ENCODE measurements at regions of chr2 and their contacts with region 1.

Region 1: GRCh38 chr2:237572021-237572741 is 5.8 kb downstream of the PRLH start:
- DNase-seq: peak; percentile 92 to 95
- ATAC-seq: peak; percentile 89 to 99
- H3K4me3 ChIP-seq: no peak overlapping the region
- H3K27ac ChIP-seq: peak overlapping the region; percentile 55 to 71; a peak in 5 of 6 replicates
- H3K4me1 ChIP-seq: peaks cover 10% of the 10 kb centered on the region; the same call in 2 of the 3 replicates
- CTCF ChIP-seq: peak; percentile 98
- EP300 ChIP-seq: no peak
- POLR2A ChIP-seq: no peak
- RAD21 ChIP-seq: peak; percentile 99 to 100

Region 2: GRCh38 chr2:237122214-237122666 is 449.9 kb before region 1 on chr2:
- CTCF ChIA-PET with region 1: interaction called, 49 read pairs
- POLR2A ChIA-PET with region 1: no interaction called
- DNase-seq: peak; percentile 35 to 80
- ATAC-seq: peak; percentile 92 to 97
- H3K4me3 ChIP-seq: no peak overlapping the region
- H3K27ac ChIP-seq: peak overlapping the region; percentile 44 to 73; a peak in 4 of 6 replicates
- H3K4me1 ChIP-seq: peaks cover 6% of the 10 kb centered on the region
- CTCF ChIP-seq: peak; percentile 86
- EP300 ChIP-seq: no peak
- POLR2A ChIP-seq: no peak
- RAD21 ChIP-seq: peak; percentile 91 to 92

Region 3: DNA sequence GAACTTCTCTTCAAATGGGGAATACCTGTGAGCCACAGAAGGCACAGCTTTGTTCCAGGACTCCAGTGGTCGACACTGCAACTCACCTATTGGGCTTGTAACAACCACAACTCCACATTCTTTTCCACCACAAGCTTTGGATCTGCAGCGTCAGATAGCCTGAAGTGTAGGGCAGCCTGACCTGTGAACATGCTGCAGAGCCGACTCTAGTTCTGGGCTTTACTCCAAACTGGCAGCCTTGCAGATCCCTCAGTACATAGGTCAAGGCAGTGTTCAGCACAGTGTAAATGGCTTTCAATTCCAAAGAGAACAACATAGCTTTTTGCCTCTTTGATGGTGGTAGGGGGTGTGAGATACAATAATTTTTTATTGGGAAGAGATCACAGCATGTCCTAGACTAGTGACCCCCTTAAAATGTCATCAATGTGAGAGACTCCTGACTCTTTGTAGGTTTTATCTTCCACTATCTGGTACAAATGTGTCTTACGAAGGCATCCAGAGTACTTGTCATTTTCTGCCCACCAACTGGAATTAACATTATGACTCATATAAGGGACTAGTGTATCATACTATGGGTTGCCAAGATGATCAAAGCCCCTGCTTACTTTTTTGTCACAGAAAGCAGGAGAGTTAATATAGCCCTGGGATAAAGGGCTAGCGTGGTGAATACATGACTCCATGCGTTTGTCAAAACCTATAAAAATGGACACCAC is 336.6 kb before region 1 on chr2:
- CTCF ChIA-PET with region 1: no interaction called
- POLR2A ChIA-PET with region 1: no interaction called
- DNase-seq: no peak
- ATAC-seq: peak; percentile 43 to 77; a peak in 4 of 6 replicates
- H3K4me3 ChIP-seq: no peak overlapping the region
- H3K27ac ChIP-seq: peak overlapping the region; percentile 21 to 55; a peak in 4 of 6 replicates
- H3K4me1 ChIP-seq: peaks cover 16% of the 10 kb centered on the region; the same call in 2 of the 3 replicates
- CTCF ChIP-seq: no peak
- EP300 ChIP-seq: no peak
- POLR2A ChIP-seq: no peak
- RAD21 ChIP-seq: no peak

Region 4: DNA sequence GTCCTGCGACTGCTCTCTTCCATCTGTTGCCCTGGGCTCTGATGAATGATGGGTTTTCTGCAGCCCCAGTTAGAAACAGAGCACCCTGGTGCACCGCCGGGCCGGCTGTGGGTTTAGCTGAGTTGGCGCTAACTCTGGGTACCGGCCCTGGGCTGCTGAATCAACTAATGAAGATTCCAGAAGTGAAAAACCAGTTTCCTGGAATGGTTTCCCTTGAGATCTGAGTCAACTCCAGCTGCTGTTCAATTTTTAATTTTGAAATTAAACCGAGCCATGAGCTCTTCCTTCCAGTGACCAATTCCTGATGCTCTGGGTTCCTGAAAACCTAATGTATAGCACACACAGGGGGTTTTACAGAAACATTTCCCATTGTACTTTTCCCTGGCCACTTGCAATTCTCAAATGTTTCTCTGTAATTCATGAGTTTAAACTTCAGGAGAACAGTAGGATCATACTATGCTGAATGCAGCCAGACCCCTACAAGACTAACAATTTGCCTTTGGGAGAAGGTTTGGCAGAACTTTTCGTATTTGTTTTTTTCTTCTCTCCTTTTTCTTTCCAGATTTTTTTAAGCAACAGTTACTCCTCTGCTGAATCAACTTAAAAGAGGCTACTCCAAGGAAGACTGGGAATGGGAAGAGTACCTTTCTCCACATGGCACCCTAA is 163.7 kb before region 1 on chr2:
- CTCF ChIA-PET with region 1: interaction called, 12 read pairs
- POLR2A ChIA-PET with region 1: interaction called, 9 read pairs
- DNase-seq: no peak
- ATAC-seq: no peak
- H3K4me3 ChIP-seq: no peak overlapping the region
- H3K27ac ChIP-seq: no peak overlapping the region
- H3K4me1 ChIP-seq: 0 out of 3 replicates have a peak, but pooled peaks cover 5% of the 10 kb centered on the region
- CTCF ChIP-seq: no peak
- EP300 ChIP-seq: no peak
- POLR2A ChIP-seq: no peak
- RAD21 ChIP-seq: no peak

Region 5: DNA sequence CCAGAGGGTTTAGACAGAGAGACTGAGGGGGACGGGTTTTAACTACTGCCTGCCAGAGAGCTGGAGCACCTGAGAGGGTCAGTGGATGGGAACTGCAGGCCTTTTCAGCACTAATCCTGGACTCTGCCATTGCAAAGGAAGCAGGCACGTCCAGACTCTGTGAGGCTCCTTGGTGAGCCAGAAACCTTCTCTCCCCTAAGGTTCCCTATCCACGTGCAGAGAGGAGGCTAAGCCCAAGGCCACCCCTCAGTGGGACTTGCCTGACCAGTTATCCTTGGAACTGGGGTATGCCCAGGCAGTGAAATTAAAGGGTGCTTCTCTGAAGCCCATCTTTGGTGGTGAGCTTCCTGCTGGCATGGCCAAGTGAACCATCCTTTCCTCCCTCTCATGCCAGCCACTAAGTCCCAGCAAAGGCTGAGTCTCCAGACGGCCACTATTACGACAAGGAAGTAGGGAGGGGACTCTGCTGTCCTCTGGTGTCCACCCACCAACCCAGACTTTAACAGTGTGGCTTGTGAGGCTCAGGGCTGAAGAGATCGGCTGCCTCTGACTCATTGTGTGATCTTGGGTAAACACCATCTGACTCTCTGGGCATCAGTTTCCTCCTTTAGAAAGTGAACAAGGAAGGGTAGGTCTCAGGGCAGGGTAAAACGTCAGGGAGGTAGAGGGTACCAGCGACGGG is 89.0 kb before region 1 on chr2:
- CTCF ChIA-PET with region 1: interaction called, 29 read pairs
- POLR2A ChIA-PET with region 1: interaction called, 6 read pairs
- DNase-seq: peak; percentile 58 to 90
- ATAC-seq: peak; percentile 57 to 61
- H3K4me3 ChIP-seq: 0 out of 3 replicates have a peak overlapping the region, but pooled peaks have one; percentile 6
- H3K27ac ChIP-seq: peak overlapping the region; percentile 98 to 99
- H3K4me1 ChIP-seq: peaks cover 42% of the 10 kb centered on the region
- CTCF ChIP-seq: no peak
- EP300 ChIP-seq: no peak
- POLR2A ChIP-seq: peak; percentile 52; the same call in 1 of the 2 replicates
- RAD21 ChIP-seq: peak; percentile 31 to 41; a peak in 2 of 5 replicates

Region 6: GRCh38 chr2:237529452-237530402 is 42.5 kb before region 1 on chr2:
- CTCF ChIA-PET with region 1: interaction called, 29 read pairs
- POLR2A ChIA-PET with region 1: no interaction called
- DNase-seq: no peak
- ATAC-seq: peak in 1 of 2 experiments; percentile 14; a peak in 3 of 6 replicates
- H3K4me3 ChIP-seq: no peak overlapping the region
- H3K27ac ChIP-seq: peak overlapping the region in 1 of 2 experiments; percentile 21; a peak in 1 of 6 replicates
- H3K4me1 ChIP-seq: peaks cover 12% of the 10 kb centered on the region; the same call in 1 of the 3 replicates
- CTCF ChIP-seq: no peak
- EP300 ChIP-seq: no peak
- POLR2A ChIP-seq: no peak
- RAD21 ChIP-seq: no peak

Region 7: GRCh38 chr2:237590272-237591140 is 18.3 kb after region 1 on chr2 and contains the start of gene RAB17:
- CTCF ChIA-PET with region 1: interaction called, 97 read pairs
- POLR2A ChIA-PET with region 1: no interaction called
- DNase-seq: peak; percentile 44 to 48
- ATAC-seq: peak; percentile 67 to 71
- H3K4me3 ChIP-seq: no peak within 1 kb of the TSS
- H3K27ac ChIP-seq: peak within 1 kb of the TSS in 1 of 2 experiments; percentile 69; a peak in 3 of 6 replicates
- H3K4me1 ChIP-seq: peaks cover 31% of the 10 kb centered on the region
- CTCF ChIP-seq: no peak
- EP300 ChIP-seq: no peak
- POLR2A ChIP-seq: no peak
- RAD21 ChIP-seq: no peak
- polyA plus RNA-seq, gene RAB17: 0.44 and 0.78 TPM in 2 replicates

Measured in A549 (cell line).